ENCODE measurements at regions of chr14 and their contacts with region 1.

Region 1: DNA sequence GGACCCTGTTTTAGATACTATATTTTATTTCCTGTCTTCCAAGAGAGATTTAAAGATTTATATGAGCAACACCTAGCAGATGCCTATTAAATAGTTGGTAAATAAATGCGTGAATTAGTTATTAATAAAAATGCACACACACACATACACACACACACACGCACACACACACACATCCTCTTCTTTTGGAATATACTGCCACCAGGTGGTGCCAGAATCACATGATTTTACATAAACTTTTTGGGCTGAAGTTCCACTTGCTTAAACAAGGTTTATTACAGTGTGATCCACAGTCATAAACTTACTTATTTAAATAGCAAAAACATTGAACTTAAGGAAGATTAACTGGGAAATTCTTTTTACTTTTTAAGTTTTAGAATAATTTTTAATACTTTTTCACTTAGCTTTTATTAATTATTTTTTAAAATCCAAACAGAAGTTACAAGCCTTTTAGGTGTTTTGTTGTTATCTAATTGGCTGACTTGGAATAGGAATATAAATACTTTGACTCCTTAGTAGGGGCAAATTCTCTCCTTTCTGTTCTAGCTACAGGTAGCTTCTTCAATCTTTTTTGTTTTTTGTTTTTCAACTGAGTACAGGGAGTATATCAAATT is 17.5 kb downstream of the RAD51B start:
- H3K4me3 ChIP-seq: no peak overlapping the region
- H3K27ac ChIP-seq: no peak overlapping the region
- H3K4me1 ChIP-seq: no peaks in the 10 kb centered on the region
- CTCF ChIP-seq: peak; percentile 42

Region 2: GRCh38 chr14:67934008-67934481 is 96.9 kb after region 1 on chr14:
- CTCF ChIA-PET with region 1: interaction called, 10 read pairs
- POLR2A ChIA-PET with region 1: no interaction called
- H3K4me3 ChIP-seq: no peak overlapping the region
- H3K27ac ChIP-seq: no peak overlapping the region
- H3K4me1 ChIP-seq: peaks cover 8% of the 10 kb centered on the region
- CTCF ChIP-seq: peak; percentile 83

Measured in HEK293 (cell line).